Activated CD4-positive, alpha-beta T cell treated with anti-CD3 and anti-CD28 coated beads for 36 hours (primary cell): ENCODE measurements at regions of chr6 and their contacts with region 1.

Region 1: DNA sequence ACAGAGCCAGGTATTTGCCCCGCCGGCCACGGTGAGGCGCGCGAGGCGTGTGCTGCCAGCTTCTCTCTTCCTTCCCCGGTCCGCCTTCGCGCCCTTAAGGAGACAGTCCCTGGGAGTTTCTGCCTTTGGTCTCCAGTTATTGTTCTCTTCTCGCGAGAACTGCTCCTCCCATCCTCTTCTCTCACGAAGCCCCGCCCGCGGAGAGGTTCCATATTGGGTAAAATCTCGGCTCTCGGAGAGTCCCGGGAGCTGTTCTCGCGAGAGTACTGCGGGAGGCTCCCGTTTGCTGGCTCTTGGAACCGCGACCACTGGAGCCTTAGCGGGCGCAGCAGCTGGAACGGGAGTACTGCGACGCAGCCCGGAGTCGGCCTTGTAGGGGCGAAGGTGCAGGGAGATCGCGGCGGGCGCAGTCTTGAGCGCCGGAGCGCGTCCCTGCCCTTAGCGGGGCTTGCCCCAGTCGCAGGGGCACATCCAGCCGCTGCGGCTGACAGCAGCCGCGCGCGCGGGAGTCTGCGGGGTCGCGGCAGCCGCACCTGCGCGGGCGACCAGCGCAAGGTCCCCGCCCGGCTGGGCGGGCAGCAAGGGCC is at the start of gene MAPK14:
- DNase-seq: peak; percentile 99
- ATAC-seq: peak; percentile 92
- H3K4me3 Mint-ChIP-seq: peak within 1 kb of the TSS; percentile 98
- H3K27ac Mint-ChIP-seq: peak within 1 kb of the TSS; percentile 98
- H3K4me1 Mint-ChIP-seq: peaks cover 38% of the 10 kb centered on the region
- H3K27me3 Mint-ChIP-seq: peaks cover 19% of the 10 kb centered on the region
- total RNA-seq, gene MAPK14: 39.1 to 44.0 TPM

Region 2: DNA sequence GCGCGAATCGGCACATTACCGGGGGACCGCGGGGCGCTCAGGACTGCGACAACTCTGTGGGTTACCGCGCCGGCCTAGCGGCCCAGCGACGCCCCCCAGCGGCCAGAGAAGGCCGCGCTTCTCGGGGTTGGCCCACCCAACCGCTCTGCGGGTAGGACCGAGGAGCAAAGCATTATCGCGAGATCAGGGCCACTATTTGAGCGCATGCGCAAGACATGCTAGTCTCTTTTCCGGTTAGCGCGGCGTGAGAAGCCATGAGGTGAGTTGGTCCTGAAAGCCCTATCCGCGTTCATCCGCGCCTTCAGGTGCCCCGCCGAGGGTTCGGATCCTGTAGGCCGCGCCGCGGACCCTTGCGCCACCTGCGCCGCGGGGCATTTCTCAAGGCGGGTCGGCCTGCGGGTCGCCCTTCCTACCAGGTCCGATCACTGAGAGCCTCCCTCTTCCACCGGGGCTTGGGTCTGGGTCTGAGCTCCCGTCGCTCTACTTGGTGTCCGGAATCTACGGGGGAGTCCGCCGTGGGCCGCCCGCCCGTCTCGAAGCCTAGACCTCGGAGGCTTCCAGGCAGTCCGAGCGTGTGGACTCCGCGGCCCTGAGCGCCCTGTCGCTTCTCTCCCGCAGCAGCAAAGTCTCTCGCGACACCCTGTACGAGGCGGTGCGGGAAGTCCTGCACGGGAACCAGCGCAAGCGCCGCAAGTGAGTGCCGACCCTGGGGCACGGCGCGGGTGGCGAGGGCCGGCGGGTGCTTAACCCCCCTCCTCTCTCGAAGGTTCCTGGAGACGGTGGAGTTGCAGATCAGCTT is 559.2 kb before region 1 on chr6 and contains the start of gene RPL10A:
- CTCF ChIA-PET with region 1: no interaction called
- POLR2A ChIA-PET with region 1: interaction called, 3 read pairs
- intact Hi-C with region 1: loop called in 1 of 2 experiments (anchors 2 kb)
- DNase-seq: peak; percentile 97
- ATAC-seq: peak; percentile 87
- H3K4me3 Mint-ChIP-seq: peak within 1 kb of the TSS; percentile 93
- H3K27ac Mint-ChIP-seq: peak within 1 kb of the TSS; percentile 98
- H3K4me1 Mint-ChIP-seq: peaks cover 43% of the 10 kb centered on the region
- H3K27me3 Mint-ChIP-seq: no peaks in the 10 kb centered on the region
- total RNA-seq, gene RPL10A: 1,952 to 2,334 TPM

Region 3: DNA sequence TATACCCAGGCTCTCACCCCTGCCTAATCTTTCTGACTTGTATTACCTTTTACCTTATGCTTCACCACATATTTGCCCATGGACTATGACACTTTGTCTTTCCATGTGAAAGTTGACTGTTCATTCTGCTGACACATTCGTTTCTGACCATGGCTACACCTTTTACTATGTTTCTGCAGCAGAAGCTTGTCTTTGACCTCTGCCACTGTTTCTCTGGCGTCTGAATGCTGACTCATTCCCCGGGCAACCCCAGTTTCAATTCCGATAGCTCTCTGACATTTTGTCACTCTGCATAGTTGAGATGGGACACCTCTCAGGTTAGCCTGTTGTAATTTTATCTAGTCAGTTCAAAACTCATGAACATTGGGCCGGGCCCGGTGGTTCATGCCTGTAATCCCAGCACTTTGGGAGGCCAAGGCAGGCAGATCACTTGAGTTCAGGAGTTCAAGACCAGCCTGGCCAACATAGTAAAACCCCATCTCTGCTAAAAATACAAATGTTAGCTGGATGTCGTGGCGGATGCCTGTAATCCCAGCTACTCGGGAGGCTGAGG is 53.8 kb before region 1 on chr6:
- CTCF ChIA-PET with region 1: no interaction called
- POLR2A ChIA-PET with region 1: no interaction called
- intact Hi-C with region 1: no loop called
- DNase-seq: peak; percentile 67
- ATAC-seq: peak; percentile 97
- H3K4me3 Mint-ChIP-seq: no peak overlapping the region
- H3K27ac Mint-ChIP-seq: peak overlapping the region; percentile 2
- H3K4me1 Mint-ChIP-seq: peaks cover 10% of the 10 kb centered on the region
- H3K27me3 Mint-ChIP-seq: no peaks in the 10 kb centered on the region

Region 4: DNA sequence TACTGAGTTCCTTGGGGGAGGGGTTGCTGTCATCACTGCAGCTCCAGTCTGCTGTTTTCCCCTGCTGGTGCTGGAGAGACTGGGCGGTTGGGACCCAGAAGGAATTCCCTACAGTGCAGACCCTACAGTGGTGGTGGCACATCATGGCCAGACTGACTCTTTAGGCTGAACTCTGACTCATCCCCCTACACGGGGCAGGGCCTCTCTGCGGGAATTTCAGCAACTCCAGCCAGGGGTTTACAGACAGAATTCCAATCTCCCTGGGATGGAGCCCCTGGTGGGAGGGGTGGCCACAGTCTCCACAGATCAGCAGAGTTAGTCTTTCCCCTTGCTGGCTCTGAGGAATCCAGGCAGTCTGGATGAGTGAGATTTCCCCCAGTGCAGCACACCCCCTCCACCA is 55.9 kb after region 1 on chr6:
- CTCF ChIA-PET with region 1: interaction called, 11 read pairs
- POLR2A ChIA-PET with region 1: interaction called, 3 read pairs
- intact Hi-C with region 1: no loop called
- DNase-seq: no peak
- ATAC-seq: no peak
- H3K4me3 Mint-ChIP-seq: no peak overlapping the region
- H3K27ac Mint-ChIP-seq: no peak overlapping the region
- H3K4me1 Mint-ChIP-seq: peaks cover 8% of the 10 kb centered on the region
- H3K27me3 Mint-ChIP-seq: no peaks in the 10 kb centered on the region

Region 5: GRCh38 chr6:36123257-36124139 is 95.9 kb after region 1 on chr6:
- CTCF ChIA-PET with region 1: interaction called, 23 read pairs
- POLR2A ChIA-PET with region 1: interaction called, 13 read pairs
- intact Hi-C with region 1: loop called in 1 of 2 experiments (anchors 1 kb)
- DNase-seq: peak; percentile 95
- ATAC-seq: peak; percentile 77
- H3K4me3 Mint-ChIP-seq: peak overlapping the region; percentile 27
- H3K27ac Mint-ChIP-seq: peak overlapping the region; percentile 64
- H3K4me1 Mint-ChIP-seq: peaks cover 89% of the 10 kb centered on the region
- H3K27me3 Mint-ChIP-seq: no peaks in the 10 kb centered on the region

Region 6: GRCh38 chr6:36266913-36267644 is 239.5 kb after region 1 on chr6:
- CTCF ChIA-PET with region 1: no interaction called
- POLR2A ChIA-PET with region 1: no interaction called
- intact Hi-C with region 1: no loop called
- DNase-seq: no peak
- ATAC-seq: no peak
- H3K4me3 Mint-ChIP-seq: no peak overlapping the region
- H3K27ac Mint-ChIP-seq: no peak overlapping the region
- H3K4me1 Mint-ChIP-seq: no peaks in the 10 kb centered on the region
- H3K27me3 Mint-ChIP-seq: no peaks in the 10 kb centered on the region

Region 7: DNA sequence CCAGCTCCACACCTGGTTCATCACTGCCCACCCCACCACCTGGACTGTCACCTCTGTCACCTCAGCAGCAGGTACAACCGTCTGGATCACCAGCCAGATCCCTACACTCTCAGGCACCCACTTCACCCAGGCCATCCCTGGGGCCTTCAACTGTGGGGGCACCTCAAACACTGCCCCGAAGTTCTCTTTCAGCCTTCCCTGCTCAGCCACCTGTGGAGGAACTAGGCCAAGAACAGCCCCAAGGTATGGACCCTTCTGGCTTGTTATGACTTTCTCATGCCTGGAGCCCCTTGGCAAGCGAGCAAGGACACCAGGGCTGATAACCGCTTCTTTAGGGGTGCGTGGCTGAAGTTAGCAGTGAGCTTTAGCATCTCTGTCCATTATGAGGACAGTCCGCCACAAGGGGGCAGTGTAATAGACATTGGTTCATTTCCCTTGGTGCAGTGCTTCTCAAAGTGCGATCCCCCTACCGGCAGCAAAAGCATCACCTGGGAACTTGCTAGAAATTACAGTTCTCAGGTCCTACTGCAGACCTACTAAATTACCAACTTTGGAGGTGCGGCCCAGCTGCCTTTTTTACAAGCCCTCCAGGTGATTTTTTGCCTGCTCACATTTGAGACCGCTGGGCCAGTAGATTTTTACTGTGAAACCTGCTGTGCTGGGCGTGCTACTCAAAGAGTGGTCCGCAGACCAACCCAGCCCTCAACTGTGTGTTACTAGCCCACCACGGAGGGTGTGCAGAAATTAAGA is 274.8 kb after region 1 on chr6:
- CTCF ChIA-PET with region 1: interaction called, 3 read pairs
- POLR2A ChIA-PET with region 1: no interaction called
- intact Hi-C with region 1: loop called in 1 of 2 experiments (anchors 1 kb)
- DNase-seq: peak; percentile 96
- ATAC-seq: peak; percentile 99
- H3K4me3 Mint-ChIP-seq: no peak overlapping the region
- H3K27ac Mint-ChIP-seq: no peak overlapping the region
- H3K4me1 Mint-ChIP-seq: no peaks in the 10 kb centered on the region
- H3K27me3 Mint-ChIP-seq: peaks cover 3% of the 10 kb centered on the region

Region 8: GRCh38 chr6:36442671-36443470 is 415.3 kb after region 1 on chr6 and contains the starts of genes KCTD20 and PXT1:
- CTCF ChIA-PET with region 1: no interaction called
- POLR2A ChIA-PET with region 1: no interaction called
- intact Hi-C with region 1: loop called in 1 of 2 experiments (anchors 2 kb)
- DNase-seq: peak; percentile 94
- ATAC-seq: peak; percentile 78
- H3K4me3 Mint-ChIP-seq: peak within 1 kb of the TSS; percentile 95
- H3K27ac Mint-ChIP-seq: peak within 1 kb of the TSS; percentile 97
- H3K4me1 Mint-ChIP-seq: peaks cover 27% of the 10 kb centered on the region
- H3K27me3 Mint-ChIP-seq: no peaks in the 10 kb centered on the region
- total RNA-seq, gene KCTD20: 46.5 to 50.6 TPM
- total RNA-seq, gene PXT1: 0.11 to 0.14 TPM

Region 9: GRCh38 chr6:36938536-36938935 is 910.9 kb after region 1 on chr6:
- CTCF ChIA-PET with region 1: no interaction called
- POLR2A ChIA-PET with region 1: no interaction called
- intact Hi-C with region 1: no loop called
- DNase-seq: no peak
- ATAC-seq: no peak
- H3K4me3 Mint-ChIP-seq: no peak overlapping the region
- H3K27ac Mint-ChIP-seq: no peak overlapping the region
- H3K4me1 Mint-ChIP-seq: no peaks in the 10 kb centered on the region
- H3K27me3 Mint-ChIP-seq: peaks cover 3% of the 10 kb centered on the region